Sigmoid colon (tissue), 7 donors: ENCODE measurements at regions of chr4 and their contacts with region 1.

Region 1: GRCh38 chr4:119628308-119629141 is at the start of gene PDE5A:
- DNase-seq: peak; percentile 91
- H3K4me3 ChIP-seq: peak within 1 kb of the TSS; percentile 75 to 96 (median 83)
- H3K27ac ChIP-seq: peak within 1 kb of the TSS; percentile 92 to 96 (median 94)
- H3K4me1 ChIP-seq: peaks cover 0 to 28% (median 16%) of the 10 kb centered on the region in 4 donors
- H3K27me3 ChIP-seq: no peaks in the 10 kb centered on the region
- CTCF ChIP-seq: peak; percentile 67 to 80 (median 75)
- EP300 ChIP-seq: no peak
- POLR2A ChIP-seq: no peak
- total RNA-seq, gene PDE5A: 138 to 209 (median 149) TPM

Region 2: DNA sequence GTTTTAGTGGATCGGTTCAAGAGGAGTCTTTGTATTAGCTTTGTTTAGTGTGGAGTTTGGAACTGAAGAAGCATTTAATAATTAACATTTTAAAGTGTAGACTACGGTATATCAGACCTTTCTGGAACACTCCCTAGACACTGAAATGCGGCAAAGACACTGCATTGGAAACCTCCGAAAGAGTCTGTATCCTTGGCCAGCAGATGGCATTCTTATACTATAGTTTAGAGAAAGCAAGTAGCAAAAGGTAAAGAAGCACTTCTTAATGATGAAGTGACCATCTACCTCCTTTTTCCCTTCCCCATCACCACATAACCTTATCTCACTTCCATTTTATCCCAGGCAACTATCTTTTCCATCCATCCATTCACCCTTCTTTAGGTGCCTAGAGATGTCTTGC is 314.2 kb before region 1 on chr4:
- intact Hi-C with region 1: loop called (anchors 10 kb)
- DNase-seq: no peak
- H3K4me3 ChIP-seq: no peak overlapping the region
- H3K27ac ChIP-seq: no peak overlapping the region
- H3K4me1 ChIP-seq: no peaks in the 10 kb centered on the region
- H3K27me3 ChIP-seq: no peaks in the 10 kb centered on the region
- CTCF ChIP-seq: peak in 2 of 4 experiments; percentile 18 to 19
- EP300 ChIP-seq: no peak
- POLR2A ChIP-seq: no peak

Region 3: DNA sequence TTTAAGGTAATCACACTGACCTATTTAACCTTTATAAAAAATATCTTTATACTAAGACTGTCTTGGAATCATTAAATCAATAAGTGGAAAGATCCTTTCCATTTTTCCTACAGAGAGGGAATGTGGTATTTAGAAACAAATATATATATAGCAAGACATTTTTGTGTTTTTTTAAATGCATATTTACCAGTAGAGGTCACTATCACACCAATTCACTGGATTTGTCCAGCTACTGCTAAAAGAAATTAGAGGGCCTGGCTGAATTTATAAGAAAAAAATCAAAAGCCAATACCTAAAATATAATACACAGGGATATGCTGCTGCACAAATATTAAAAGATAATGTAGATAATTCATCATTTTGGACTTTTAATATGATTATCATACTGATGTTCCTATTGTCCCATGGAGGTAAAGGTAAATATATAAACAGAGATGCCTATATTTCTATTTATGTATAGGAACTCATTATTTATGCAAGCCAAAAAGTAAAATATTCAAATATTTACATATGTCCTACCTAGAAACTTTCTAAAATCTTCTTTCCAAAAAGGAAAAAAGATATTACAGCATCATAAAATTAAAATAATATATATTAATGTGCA is 69.4 kb before region 1 on chr4:
- intact Hi-C with region 1: loop called (anchors 1 kb)
- DNase-seq: no peak
- H3K4me3 ChIP-seq: no peak overlapping the region
- H3K27ac ChIP-seq: peak overlapping the region in 2 of 4 donors; percentile 38 to 40
- H3K4me1 ChIP-seq: peaks cover 0 to 15% (median 6%) of the 10 kb centered on the region in 4 donors
- H3K27me3 ChIP-seq: no peaks in the 10 kb centered on the region
- CTCF ChIP-seq: peak; percentile 35 to 61 (median 40)
- EP300 ChIP-seq: no peak
- POLR2A ChIP-seq: no peak

Region 4: DNA sequence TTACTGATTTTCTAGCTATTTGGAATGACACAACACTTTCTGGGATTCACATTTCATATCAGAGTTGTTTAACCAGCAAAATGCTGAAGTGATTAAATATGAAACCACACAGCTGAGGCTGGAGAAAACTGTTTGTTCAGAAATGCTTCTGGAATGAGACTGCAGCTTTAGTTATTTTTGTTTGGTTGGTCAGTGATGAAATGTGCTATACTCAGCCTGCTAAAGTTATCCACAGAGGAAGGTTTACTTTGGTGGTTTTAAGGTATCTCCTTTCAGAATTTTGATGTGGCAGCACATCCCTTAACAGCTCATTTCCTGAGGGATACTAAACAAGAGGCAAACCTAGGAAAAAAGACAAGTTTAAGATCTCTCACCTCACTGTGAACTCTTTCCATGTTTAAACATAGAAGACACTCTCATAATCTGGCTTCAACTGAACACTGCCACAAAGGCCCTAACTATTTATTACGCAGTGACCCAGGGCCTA is 106.7 kb after region 1 on chr4:
- intact Hi-C with region 1: loop called (anchors 5 kb)
- DNase-seq: no peak
- H3K4me3 ChIP-seq: no peak overlapping the region
- H3K27ac ChIP-seq: peak overlapping the region; percentile 49 to 84 (median 77)
- H3K4me1 ChIP-seq: peaks cover 0 to 49% (median 30%) of the 10 kb centered on the region in 4 donors
- H3K27me3 ChIP-seq: no peaks in the 10 kb centered on the region
- CTCF ChIP-seq: no peak
- EP300 ChIP-seq: no peak
- POLR2A ChIP-seq: no peak

Region 5: DNA sequence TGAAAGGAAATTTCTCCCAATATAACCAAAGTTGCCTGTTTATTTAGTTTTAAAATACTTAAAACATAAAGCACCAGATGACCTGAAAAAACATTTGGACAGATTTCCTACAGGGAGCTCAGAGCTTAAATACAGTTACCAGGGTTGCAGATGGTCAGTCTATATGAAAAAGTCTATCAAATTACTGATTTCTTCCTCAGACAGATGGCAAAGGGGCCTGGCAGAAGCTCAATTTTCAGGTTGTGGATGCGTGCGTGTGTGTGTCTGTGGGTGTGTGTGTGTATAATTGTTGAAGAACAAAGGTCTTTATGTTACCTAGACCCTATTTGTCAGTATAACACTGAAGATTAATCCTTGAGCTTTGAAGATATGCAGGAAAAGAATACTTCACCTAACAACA is 268.7 kb after region 1 on chr4:
- intact Hi-C with region 1: loop called (anchors 5 kb)
- DNase-seq: no peak
- H3K4me3 ChIP-seq: no peak overlapping the region
- H3K27ac ChIP-seq: no peak overlapping the region
- H3K4me1 ChIP-seq: peaks cover 0 to 31% (median 12%) of the 10 kb centered on the region in 4 donors
- H3K27me3 ChIP-seq: no peaks in the 10 kb centered on the region
- CTCF ChIP-seq: no peak
- EP300 ChIP-seq: no peak
- POLR2A ChIP-seq: no peak

Region 6: DNA sequence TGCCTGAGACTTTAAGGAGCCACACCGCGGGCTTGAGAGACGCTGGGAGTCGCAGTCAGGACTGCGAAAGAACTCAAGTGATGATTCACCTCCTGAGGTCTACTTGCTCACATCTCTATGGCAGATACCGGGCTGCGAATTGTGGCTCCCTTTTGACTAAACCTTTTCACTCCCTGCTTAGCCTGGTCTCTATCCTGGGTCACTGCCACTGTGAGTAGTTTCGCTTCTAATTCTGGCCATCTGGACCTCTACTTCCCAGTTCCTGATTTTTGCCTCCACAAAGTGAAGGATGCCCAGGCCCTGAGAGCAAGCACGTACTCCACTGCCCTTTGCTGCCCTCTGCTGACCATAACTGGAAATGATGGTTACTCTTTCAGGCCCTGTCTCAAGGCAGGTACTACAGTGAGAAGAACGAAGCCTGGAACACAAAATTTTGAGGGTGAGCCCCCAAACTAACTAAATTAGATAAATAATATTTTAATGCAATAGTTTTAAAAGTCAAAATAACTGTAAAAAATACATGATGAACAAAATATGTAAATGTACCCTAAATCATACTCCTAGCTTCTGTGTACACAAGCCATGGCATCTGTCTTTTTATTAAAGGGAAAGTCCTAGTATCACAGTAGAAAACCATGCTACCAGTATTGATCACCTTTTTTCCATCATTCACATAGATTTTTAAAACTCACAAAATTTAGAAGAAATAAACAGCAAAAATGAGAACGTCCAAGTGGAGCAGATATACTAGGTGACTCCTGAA is 421.4 kb after region 1 on chr4:
- intact Hi-C with region 1: loop called (anchors 1 kb)
- DNase-seq: peak; percentile 93
- H3K4me3 ChIP-seq: peak overlapping the region; percentile 28 to 49 (median 42)
- H3K27ac ChIP-seq: peak overlapping the region; percentile 80 to 85 (median 82)
- H3K4me1 ChIP-seq: peaks cover 0 to 28% (median 13%) of the 10 kb centered on the region in 4 donors
- H3K27me3 ChIP-seq: no peaks in the 10 kb centered on the region
- CTCF ChIP-seq: peak; percentile 78 to 87 (median 82)
- EP300 ChIP-seq: no peak
- POLR2A ChIP-seq: no peak